CD14-positive monocyte (primary cell): ENCODE measurements at regions of chr14 and their contacts with region 1.

Region 1: DNA sequence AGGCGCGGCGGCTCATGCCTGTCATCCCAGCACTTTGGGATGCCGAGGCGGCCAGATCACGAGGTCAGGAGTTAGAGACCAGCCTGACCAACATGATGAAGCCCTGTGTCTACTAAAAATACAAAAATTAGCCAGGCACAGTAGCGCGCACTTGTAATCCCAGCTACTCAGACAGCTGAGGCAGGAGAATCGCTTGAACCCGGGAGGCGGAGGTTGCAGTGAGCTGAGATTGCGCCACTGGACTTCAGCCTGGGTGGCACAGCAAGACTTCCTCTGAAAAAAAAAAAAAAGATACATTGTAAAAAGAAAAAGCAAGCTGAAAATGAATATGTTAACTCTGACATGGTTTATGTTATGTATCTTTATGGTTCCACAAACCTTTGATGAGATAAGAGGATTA is 33.6 kb downstream of the RPGRIP1 start:
- DNase-seq: no peak
- H3K4me3 ChIP-seq: peak overlapping the region in 1 of 3 experiments; percentile 17
- H3K4me3 Mint-ChIP-seq: peak overlapping the region in 1 of 2 donors; percentile 72
- H3K27ac ChIP-seq: peak overlapping the region; percentile 20
- H3K27ac Mint-ChIP-seq: peak overlapping the region in 1 of 7 donors; percentile 76
- H3K4me1 ChIP-seq: peaks cover 53 to 56% of the 10 kb centered on the region in 2 donors
- H3K4me1 Mint-ChIP-seq: peaks cover 42% of the 10 kb centered on the region
- H3K27me3 ChIP-seq: no peaks in the 10 kb centered on the region
- H3K27me3 Mint-ChIP-seq: peaks cover 0 to 6% (median 2%) of the 10 kb centered on the region in 3 donors
- CTCF ChIP-seq: no peak

Region 2: DNA sequence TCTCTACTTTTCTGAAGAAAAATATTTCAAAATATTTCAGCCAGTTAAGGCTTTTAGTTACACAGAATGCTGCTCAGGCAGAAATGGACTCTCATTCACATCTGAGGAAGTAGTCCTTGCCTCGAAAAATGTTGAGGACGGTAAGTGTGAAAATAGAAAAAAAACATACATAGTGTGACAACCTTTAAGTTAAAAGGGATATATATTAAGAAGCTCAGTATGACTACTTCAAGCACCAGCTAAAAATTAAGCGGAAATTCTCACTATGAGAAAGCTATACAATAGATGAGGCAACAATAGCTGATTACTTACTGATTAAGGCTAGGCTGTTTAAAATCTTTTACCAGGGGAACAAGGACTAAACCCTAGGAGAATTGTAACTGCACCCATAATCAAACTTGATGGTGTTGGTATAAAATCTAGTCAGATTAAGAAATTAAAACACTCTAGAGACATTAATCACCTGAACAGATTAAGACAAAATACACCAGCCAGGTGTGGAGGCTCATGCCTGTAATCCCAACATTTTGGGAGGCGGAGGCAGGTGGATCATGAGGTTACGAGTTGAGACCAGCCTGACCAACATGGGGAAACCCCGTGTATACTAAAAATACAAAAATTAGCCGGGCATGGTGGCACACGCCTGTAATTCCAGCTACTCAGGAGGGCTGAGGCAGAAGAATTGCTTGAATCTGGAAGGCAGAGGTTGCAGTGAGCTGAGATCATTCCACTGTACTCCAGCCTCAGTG is 98.2 kb before region 1 on chr14:
- intact Hi-C with region 1: no loop called
- DNase-seq: no peak
- H3K4me3 ChIP-seq: no peak overlapping the region
- H3K4me3 Mint-ChIP-seq: no peak overlapping the region
- H3K27ac ChIP-seq: peak overlapping the region in 1 of 2 donors; percentile 24
- H3K27ac Mint-ChIP-seq: peak overlapping the region in 2 of 7 donors; percentile 26 to 63
- H3K4me1 ChIP-seq: no peaks in the 10 kb centered on the region
- H3K4me1 Mint-ChIP-seq: no peaks in the 10 kb centered on the region
- H3K27me3 ChIP-seq: no peaks in the 10 kb centered on the region
- H3K27me3 Mint-ChIP-seq: no peaks in the 10 kb centered on the region
- CTCF ChIP-seq: no peak

Region 3: GRCh38 chr14:21269252-21270046 is 44.1 kb before region 1 on chr14 and contains the start of gene HNRNPC:
- intact Hi-C with region 1: loop called in 1 of 2 experiments (anchors 5 kb)
- DNase-seq: peak; percentile 99 to 100 (median 99)
- H3K4me3 ChIP-seq: peak within 1 kb of the TSS; percentile 95 to 98 (median 97)
- H3K4me3 Mint-ChIP-seq: peak within 1 kb of the TSS; percentile 100
- H3K27ac ChIP-seq: peak within 1 kb of the TSS; percentile 94 to 99
- H3K27ac Mint-ChIP-seq: peak within 1 kb of the TSS; percentile 100
- H3K4me1 ChIP-seq: peaks cover 45 to 55% of the 10 kb centered on the region in 2 donors
- H3K4me1 Mint-ChIP-seq: peaks cover 44% of the 10 kb centered on the region
- H3K27me3 ChIP-seq: no peaks in the 10 kb centered on the region
- H3K27me3 Mint-ChIP-seq: peaks cover 0 to 3% (median 0%) of the 10 kb centered on the region in 3 donors
- CTCF ChIP-seq: no peak
- polyA plus RNA-seq, gene HNRNPC: 391 to 609 (median 580) TPM